Left lung (tissue), 14 donors: ENCODE measurements at regions of chr12 and their contacts with region 1.

Region 1: GRCh38 chr12:107992870-107993451 is 136.1 kb upstream of the WSCD2 start:
- DNase-seq: peak in 1 of 4 donors; percentile 15
- ATAC-seq: peak; percentile 72
- H3K4me3 ChIP-seq: no peak overlapping the region
- H3K27ac ChIP-seq: no peak overlapping the region
- H3K4me1 ChIP-seq: no peaks in the 10 kb centered on the region
- H3K27me3 ChIP-seq: peaks cover 5 to 16% of the 10 kb centered on the region in 2 donors
- CTCF ChIP-seq: peak; percentile 32 to 47

Region 2: DNA sequence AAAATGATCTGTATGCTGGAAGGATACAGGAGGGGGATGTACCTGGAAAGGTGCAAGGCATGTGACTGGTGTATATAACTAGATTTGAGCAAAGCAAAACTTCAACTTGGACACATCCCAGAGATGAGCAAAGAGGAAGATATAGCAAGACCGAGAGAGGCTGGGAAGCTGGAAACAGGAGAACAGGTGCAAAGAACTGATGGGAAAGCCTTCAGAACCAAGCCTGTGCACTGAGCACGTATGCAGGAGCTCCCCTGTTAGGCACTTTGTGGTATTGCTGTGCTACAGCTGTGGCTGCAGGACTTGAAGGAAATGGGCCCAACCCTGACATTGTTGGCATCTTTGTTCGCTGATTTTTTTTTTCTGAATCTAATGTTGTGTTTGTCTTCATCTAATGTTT is 428.0 kb before region 1 on chr12:
- intact Hi-C with region 1: no loop called
- DNase-seq: no peak
- ATAC-seq: peak; percentile 77
- H3K4me3 ChIP-seq: no peak overlapping the region
- H3K27ac ChIP-seq: no peak overlapping the region
- H3K4me1 ChIP-seq: no peaks in the 10 kb centered on the region
- H3K27me3 ChIP-seq: no peaks in the 10 kb centered on the region
- CTCF ChIP-seq: peak in 1 of 2 donors; percentile 21

Region 3: GRCh38 chr12:107702106-107702505 is 290.9 kb before region 1 on chr12:
- intact Hi-C with region 1: no loop called
- DNase-seq: no peak
- ATAC-seq: no peak
- H3K4me3 ChIP-seq: no peak overlapping the region
- H3K27ac ChIP-seq: no peak overlapping the region
- H3K4me1 ChIP-seq: no peaks in the 10 kb centered on the region
- H3K27me3 ChIP-seq: no peaks in the 10 kb centered on the region
- CTCF ChIP-seq: no peak

Region 4: GRCh38 chr12:108468201-108468968 is 475.4 kb after region 1 on chr12:
- intact Hi-C with region 1: loop called in 1 of 2 experiments (anchors 10 kb)
- DNase-seq: peak in 2 of 4 donors; percentile 46 to 62
- ATAC-seq: peak; percentile 26
- H3K4me3 ChIP-seq: no peak overlapping the region
- H3K27ac ChIP-seq: no peak overlapping the region
- H3K4me1 ChIP-seq: no peaks in the 10 kb centered on the region
- H3K27me3 ChIP-seq: peaks cover 0 to 44% of the 10 kb centered on the region in 2 donors
- CTCF ChIP-seq: no peak